ENCODE measurements at regions of chr21 and their contacts with region 1.

Region 1: GRCh38 chr21:43646550-43647260 is 12.6 kb downstream of the HSF2BP start:
- DNase-seq: peak; percentile 92
- H3K4me3 Mint-ChIP-seq: no peak overlapping the region
- H3K27ac Mint-ChIP-seq: no peak overlapping the region
- H3K4me1 Mint-ChIP-seq: peaks cover 15% of the 10 kb centered on the region
- H3K27me3 Mint-ChIP-seq: no peaks in the 10 kb centered on the region

Region 2: GRCh38 chr21:42923541-42924432 is 722.9 kb before region 1 on chr21:
- CTCF ChIA-PET with region 1: interaction called, 3 read pairs
- intact Hi-C with region 1: loop called (anchors 1 kb)
- DNase-seq: peak; percentile 90
- H3K4me3 Mint-ChIP-seq: peak overlapping the region; percentile 59
- H3K27ac Mint-ChIP-seq: peak overlapping the region; percentile 73
- H3K4me1 Mint-ChIP-seq: peaks cover 15% of the 10 kb centered on the region
- H3K27me3 Mint-ChIP-seq: no peaks in the 10 kb centered on the region

Region 3: DNA sequence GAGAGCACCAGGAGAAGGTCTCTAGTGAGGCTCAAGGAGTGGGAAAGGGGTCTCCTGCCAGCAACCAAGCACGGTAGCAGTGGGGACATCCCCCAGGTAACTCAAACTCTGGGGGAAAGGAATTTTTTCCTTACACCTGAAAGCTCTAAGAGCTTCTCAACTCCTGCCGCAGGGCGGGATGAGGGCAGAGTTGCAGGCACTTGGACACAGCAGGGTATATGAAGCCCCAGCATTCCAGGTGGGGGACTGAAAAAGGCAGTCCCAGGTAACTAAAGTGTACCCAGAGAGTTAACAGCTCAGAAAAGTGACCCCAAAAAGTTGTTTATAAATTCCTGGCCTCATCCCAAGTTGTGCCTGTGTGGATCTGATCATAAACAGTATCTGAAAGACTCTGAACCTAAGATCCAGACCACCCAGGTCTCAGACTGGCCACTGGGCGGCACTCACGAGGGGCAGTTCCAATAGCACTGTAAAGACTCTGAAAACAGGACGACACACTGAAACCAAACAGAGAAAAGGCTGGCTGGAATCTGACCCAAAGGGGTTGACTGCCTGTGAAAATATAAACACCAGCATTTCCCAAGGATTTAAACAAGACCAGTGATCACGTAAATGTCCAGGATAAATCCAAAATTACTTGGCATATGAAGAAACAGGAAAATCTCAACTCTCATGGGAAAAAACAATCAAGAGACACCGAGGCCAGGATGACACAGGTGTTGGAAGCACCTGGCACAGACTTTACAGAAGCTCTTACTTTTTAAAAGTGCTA is 34.9 kb before region 1 on chr21:
- CTCF ChIA-PET with region 1: interaction called, 9 read pairs
- intact Hi-C with region 1: loop called (anchors 5 kb)
- DNase-seq: peak; percentile 18
- H3K4me3 Mint-ChIP-seq: no peak overlapping the region
- H3K27ac Mint-ChIP-seq: no peak overlapping the region
- H3K4me1 Mint-ChIP-seq: peaks cover 3% of the 10 kb centered on the region
- H3K27me3 Mint-ChIP-seq: no peaks in the 10 kb centered on the region

Region 4: DNA sequence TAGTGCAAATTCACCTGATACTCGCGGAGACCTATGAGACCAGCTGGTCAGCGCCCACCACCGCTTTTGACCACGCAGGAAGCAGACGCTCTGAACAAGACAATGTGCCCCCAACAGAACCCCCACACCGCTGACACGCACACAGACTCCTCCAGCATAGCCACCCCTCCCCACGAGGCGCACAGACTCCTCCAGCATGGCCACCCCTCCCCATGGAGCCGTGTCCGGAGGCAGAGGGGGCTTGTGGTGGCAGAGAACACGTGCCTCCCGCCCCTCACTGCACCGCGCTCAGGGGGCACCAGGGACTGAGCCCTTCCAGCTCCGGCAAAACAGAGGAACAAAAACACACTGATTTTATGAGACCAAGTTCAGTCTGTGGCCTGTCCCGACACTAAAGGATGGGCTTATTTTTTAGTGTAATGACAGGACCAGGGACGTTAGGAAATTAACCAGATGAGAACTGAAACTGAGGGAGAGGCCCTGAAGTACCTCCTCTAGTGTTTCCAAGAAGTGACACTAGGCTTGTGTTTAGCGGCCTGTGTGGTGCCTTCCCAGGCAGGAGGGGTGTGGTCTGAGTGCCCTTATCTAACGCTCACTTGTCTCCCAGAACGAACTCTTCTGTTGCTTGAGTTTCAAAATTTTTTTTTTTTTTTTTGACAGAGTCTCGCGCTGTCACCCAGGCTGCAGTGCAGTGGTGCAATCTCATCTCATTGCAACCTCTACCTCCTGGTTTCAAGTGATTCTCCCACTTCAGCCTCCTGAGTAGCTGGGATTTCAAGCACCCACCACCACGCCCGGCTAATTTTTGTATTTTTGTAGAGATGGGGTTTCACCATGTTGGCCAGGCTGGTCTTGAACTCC is 208.3 kb after region 1 on chr21:
- CTCF ChIA-PET with region 1: no interaction called
- intact Hi-C with region 1: no loop called
- DNase-seq: peak; percentile 83
- H3K4me3 Mint-ChIP-seq: no peak overlapping the region
- H3K27ac Mint-ChIP-seq: peak overlapping the region; percentile 66
- H3K4me1 Mint-ChIP-seq: peaks cover 20% of the 10 kb centered on the region
- H3K27me3 Mint-ChIP-seq: peaks cover 10% of the 10 kb centered on the region

Region 5: DNA sequence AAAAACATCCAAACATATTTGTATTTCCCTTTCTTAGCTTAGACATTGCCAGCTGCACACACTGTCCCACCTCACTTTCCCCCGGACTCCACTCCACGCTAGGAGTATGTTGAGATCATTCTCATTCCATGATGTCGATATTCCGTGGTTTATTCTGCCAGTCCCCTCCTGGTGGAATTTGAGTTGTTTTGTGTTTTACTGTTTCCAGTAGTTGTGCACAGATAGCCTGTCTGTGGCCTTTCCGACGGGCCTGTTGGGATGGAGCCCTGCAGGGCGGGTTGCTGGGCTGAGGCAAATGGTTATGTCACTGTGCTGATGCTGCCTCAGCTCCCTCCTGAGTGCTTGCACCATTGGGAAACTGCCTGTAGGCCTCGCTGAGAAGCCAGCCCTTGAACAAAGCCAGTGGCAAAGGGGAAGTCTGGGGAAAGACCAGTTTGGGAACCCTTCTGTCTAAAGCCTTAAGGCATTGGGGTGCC is 378.2 kb after region 1 on chr21:
- CTCF ChIA-PET with region 1: no interaction called
- intact Hi-C with region 1: no loop called
- DNase-seq: peak; percentile 35
- H3K4me3 Mint-ChIP-seq: no peak overlapping the region
- H3K27ac Mint-ChIP-seq: peak overlapping the region; percentile 81
- H3K4me1 Mint-ChIP-seq: peaks cover 81% of the 10 kb centered on the region
- H3K27me3 Mint-ChIP-seq: no peaks in the 10 kb centered on the region

Region 6: GRCh38 chr21:44405948-44406872 is 759.5 kb after region 1 on chr21:
- CTCF ChIA-PET with region 1: no interaction called
- intact Hi-C with region 1: no loop called
- DNase-seq: no peak
- H3K4me3 Mint-ChIP-seq: no peak overlapping the region
- H3K27ac Mint-ChIP-seq: no peak overlapping the region
- H3K4me1 Mint-ChIP-seq: peaks cover 8% of the 10 kb centered on the region
- H3K27me3 Mint-ChIP-seq: no peaks in the 10 kb centered on the region